ENCODE measurements at regions of chr1 and their contacts with region 1.

Region 1: DNA sequence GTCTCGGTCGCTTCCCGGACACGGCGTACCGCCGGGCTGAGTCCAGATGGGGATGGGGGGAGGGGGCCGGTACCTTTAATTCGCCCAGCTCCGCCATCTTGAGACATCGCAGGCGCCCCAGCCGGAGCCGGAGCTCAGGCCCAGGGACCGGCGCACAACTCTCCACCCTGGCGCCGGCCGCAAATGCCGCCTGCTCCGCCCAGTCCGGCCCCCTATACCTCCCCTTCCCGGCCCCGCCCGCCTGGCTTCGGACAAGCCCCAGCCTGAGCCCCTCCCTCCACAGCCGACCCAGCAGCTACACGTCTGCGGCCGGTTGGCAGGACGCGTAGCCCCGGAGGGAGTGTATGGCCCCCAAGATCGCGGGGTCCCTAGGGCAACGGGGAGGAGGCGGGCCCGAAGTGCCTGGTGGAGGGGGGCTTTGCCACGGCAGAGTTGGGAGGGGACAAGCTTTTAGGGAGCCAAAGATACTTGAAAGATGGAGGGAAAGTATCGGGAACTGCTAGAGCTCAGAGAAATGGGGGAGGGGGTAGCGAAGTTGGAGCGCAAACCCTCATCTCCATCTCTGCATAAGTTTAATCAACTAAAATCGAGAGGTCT is at the start of gene PIAS3:
- DNase-seq: peak; percentile 65
- ATAC-seq: peak; percentile 93
- H3K4me3 ChIP-seq: peak within 1 kb of the TSS; percentile 82
- H3K27ac ChIP-seq: peak within 1 kb of the TSS; percentile 67
- H3K4me1 ChIP-seq: no peaks in the 10 kb centered on the region
- H3K27me3 ChIP-seq: no peaks in the 10 kb centered on the region
- CTCF ChIP-seq: no peak
- EP300 ChIP-seq: 0 out of 4 replicates have a peak, but pooled peaks of 1 of the 2 experiments have one; percentile 12
- POLR2A ChIP-seq: peak; percentile 68
- RAD21 ChIP-seq: no peak
- polyA plus RNA-seq, gene PIAS3: 0.85 to 1.6 TPM

Region 2: GRCh38 chr1:145823565-145824498 is 35.2 kb before region 1 on chr1 and contains the starts of genes POLR3C and RNF115:
- CTCF ChIA-PET with region 1: interaction called, 10 read pairs
- POLR2A ChIA-PET with region 1: interaction called, 20 read pairs
- RAD21 ChIA-PET with region 1: no interaction called
- SMC1A ChIA-PET with region 1: interaction called, 13 read pairs
- in situ Hi-C with region 1: no loop called
- intact Hi-C with region 1: no loop called
- DNase-seq: peak; percentile 48
- ATAC-seq: peak; percentile 94
- H3K4me3 ChIP-seq: peak within 1 kb of the TSS; percentile 67
- H3K27ac ChIP-seq: peak within 1 kb of the TSS; percentile 95
- H3K4me1 ChIP-seq: peaks cover 10% of the 10 kb centered on the region
- H3K27me3 ChIP-seq: no peaks in the 10 kb centered on the region
- CTCF ChIP-seq: no peak
- EP300 ChIP-seq: 0 out of 4 replicates have a peak, but pooled peaks of 1 of the 2 experiments have one; percentile 34
- POLR2A ChIP-seq: peak; percentile 91
- RAD21 ChIP-seq: no peak
- polyA plus RNA-seq, gene POLR3C: 13.0 to 21.1 TPM
- polyA plus RNA-seq, gene RNF115: 3.4 to 5.4 TPM

Region 3: DNA sequence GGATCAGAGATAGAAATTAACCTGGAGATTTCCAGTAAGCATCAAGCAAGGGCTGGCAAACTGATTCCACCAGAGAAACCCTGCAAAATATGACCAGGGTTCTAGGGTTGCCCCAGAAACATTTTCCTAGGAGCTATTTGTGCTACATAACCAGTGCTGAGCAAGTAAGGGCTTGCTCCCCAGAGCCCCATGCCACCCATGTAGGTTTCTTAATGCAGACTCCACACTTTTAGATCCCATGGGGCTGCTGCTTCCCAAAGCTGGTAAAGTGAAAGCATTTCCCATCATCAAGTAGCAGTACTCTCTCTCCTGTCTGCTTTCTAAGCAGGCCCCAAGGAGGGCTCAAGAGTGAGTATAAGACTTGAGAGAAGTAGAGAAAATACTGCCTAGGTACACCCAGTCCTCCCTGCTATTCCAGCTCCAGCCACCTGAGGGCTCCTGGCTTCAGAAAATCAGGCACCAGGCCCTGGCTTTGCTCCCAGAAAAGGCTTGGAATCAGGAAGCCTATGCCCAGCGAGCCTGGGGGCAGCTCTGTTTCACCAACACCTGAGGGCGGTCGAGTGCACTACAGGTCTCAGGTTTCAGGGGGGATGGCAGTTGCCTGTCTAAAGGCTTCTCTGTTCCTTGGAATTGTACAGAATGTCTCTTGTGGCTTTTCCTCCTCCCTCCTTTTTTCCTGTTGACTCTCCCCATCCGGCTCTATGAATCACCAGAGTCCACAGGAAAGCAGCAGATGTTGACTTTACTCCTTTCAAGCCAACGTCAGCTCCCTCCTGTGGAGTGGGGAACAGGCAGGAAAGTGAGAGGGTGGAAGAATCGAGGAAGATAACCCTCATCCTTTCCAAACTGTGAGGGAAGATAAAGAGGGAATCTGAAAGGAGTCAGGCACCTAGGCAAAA is 32.8 kb after region 1 on chr1:
- CTCF ChIA-PET with region 1: interaction called, 13 read pairs
- POLR2A ChIA-PET with region 1: interaction called, 3 read pairs
- RAD21 ChIA-PET with region 1: interaction called, 3 read pairs
- SMC1A ChIA-PET with region 1: interaction called, 9 read pairs
- in situ Hi-C with region 1: no loop called
- intact Hi-C with region 1: no loop called
- DNase-seq: no peak
- ATAC-seq: peak; percentile 95
- H3K4me3 ChIP-seq: no peak overlapping the region
- H3K27ac ChIP-seq: no peak overlapping the region
- H3K4me1 ChIP-seq: no peaks in the 10 kb centered on the region
- H3K27me3 ChIP-seq: no peaks in the 10 kb centered on the region
- CTCF ChIP-seq: peak; percentile 89 to 90 (median 90)
- EP300 ChIP-seq: no peak
- POLR2A ChIP-seq: no peak
- RAD21 ChIP-seq: peak; percentile 81

Region 4: DNA sequence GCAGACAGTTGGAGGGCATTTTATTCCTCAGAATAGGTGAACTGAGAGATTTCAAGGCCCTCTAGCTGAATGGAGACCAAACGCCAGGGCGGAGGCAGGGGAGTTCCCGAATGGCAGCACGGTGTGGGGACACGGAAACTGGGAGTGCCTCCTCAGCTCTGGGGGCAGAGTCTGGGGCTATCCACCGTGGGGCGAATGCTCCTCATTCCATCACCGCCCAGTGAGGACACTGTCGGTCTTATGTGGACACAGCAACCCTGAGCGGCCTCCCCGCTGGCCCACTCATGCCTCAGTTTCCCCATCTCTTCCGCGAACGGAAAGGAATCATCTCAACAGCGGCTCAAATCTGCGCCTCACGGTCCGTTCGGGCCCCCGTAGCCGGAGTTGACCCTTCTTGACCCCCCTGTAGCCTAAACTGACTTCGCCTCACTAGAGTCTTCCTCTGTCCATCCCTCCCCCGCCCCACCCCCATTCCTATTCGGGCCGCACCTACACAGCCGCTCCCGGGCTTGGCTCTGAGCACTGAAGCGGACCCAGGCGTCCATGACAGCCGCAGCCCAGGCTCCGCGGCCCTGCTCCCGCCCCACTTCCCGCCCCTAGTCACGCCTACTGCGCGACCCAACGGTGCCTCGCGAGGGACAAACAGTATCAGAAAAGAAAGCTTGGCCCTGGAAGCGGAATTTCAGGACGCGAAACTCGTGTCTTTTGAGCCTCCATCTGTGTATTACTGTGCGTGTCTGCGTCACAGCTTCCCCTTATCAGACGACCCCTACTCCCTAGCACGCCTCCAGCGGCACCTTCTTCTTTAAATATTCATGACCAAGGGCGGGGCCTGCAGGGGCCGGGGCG is 59.4 kb after region 1 on chr1 and contains the start of gene PEX11B:
- CTCF ChIA-PET with region 1: interaction called, 3 read pairs
- POLR2A ChIA-PET with region 1: interaction called, 8 read pairs
- RAD21 ChIA-PET with region 1: interaction called, 7 read pairs
- SMC1A ChIA-PET with region 1: interaction called, 3 read pairs
- in situ Hi-C with region 1: loop called (anchors 5 kb)
- intact Hi-C with region 1: loop called (anchors 1 kb)
- DNase-seq: peak; percentile 75
- ATAC-seq: peak; percentile 94
- H3K4me3 ChIP-seq: peak within 1 kb of the TSS; percentile 97
- H3K27ac ChIP-seq: peak within 1 kb of the TSS; percentile 93
- H3K4me1 ChIP-seq: peaks cover 17% of the 10 kb centered on the region
- H3K27me3 ChIP-seq: no peaks in the 10 kb centered on the region
- CTCF ChIP-seq: no peak
- EP300 ChIP-seq: no peak
- POLR2A ChIP-seq: peak; percentile 93
- RAD21 ChIP-seq: no peak
- polyA plus RNA-seq, gene PEX11B: 44.8 to 69.4 TPM

Region 5: DNA sequence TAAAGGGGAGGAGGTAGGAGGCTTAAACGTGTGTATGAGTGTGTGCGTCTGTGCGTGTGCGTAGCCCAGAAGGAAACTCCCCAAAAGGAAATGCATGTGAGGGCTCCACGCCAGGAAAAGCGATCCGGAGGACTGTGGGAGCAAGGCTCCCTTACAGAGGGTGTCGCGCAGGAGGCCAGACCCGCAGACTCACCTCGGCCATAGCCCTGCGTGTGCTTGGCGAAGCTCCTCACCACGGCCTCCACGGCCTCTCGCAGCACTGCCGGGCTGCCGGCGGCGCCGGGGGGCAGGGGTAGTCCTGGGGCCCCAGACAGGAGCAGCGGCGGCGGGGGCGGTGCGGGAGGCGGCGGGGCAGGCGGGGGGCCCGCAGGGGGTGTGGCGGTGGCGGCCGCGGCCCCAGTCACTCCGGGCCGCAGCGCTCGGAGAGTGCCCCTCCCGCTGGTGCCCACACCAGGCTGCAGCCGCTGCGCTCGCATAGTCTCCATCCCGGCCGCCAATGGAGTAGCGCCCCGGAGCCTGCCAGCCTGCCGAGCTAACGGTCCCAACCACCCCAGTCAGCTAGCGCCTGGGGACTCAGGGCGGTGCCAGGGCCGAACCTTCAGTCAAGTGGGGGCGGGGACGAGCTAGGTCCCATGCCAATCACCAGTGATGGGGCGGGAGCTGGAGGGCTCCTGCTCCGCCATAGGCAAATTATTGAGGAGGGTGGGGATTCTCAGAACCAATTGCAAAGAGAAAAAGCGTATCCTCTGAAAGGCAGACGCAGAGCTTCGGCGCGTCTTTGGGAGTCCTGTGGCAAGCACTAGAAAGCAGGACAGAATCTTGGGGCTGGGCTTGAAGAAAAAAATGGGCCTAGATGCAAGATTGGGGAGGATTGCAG is 98.7 kb after region 1 on chr1 and contains the start of gene LIX1L:
- CTCF ChIA-PET with region 1: interaction called, 3 read pairs
- POLR2A ChIA-PET with region 1: interaction called, 8 read pairs
- RAD21 ChIA-PET with region 1: interaction called, 14 read pairs
- SMC1A ChIA-PET with region 1: interaction called, 7 read pairs
- in situ Hi-C with region 1: no loop called
- intact Hi-C with region 1: no loop called
- DNase-seq: peak; percentile 89
- ATAC-seq: peak; percentile 90
- H3K4me3 ChIP-seq: peak within 1 kb of the TSS; percentile 78
- H3K27ac ChIP-seq: peak within 1 kb of the TSS; percentile 73
- H3K4me1 ChIP-seq: peaks cover 8% of the 10 kb centered on the region
- H3K27me3 ChIP-seq: no peaks in the 10 kb centered on the region; a peak in 1 of 4 replicates
- CTCF ChIP-seq: no peak
- EP300 ChIP-seq: no peak
- POLR2A ChIP-seq: peak; percentile 86
- RAD21 ChIP-seq: no peak
- polyA plus RNA-seq, gene LIX1L: 5.5 to 12.2 TPM

Region 6: DNA sequence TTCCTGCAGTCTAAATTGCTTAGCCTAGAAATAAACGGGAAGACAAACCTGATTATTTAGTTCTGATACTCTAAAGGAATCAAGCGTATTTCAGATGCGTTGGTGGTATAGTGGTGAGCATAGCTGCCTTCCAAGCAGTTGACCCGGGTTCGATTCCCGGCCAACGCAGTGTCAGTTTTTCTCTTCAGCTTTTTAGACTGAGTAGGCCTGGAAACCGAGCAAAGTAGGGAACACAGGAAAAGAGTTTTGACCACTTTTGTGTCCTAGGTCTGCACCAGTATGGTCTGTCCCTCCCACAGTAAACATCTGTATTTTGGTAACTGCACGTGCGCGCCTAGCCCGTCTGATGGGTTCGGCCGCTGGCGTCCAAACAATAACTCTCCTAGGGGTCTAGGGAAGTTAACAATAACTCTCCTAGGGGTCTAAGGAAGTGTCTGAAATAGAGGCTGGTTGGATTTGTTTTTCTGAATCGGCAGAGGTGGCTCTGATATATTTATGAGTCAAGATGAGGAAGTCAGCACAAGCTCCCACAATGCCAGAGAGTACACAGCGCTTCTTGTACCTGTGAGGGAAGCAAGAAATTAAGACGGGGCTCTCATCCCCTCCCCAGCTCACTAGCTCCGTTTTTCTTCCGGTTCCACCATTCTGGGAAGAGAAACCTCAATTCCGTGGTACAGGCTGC is 178.1 kb after region 1 on chr1:
- CTCF ChIA-PET with region 1: interaction called, 7 read pairs
- POLR2A ChIA-PET with region 1: interaction called, 14 read pairs
- RAD21 ChIA-PET with region 1: interaction called, 4 read pairs
- SMC1A ChIA-PET with region 1: no interaction called
- in situ Hi-C with region 1: no loop called
- intact Hi-C with region 1: no loop called
- DNase-seq: peak; percentile 87
- ATAC-seq: peak; percentile 62
- H3K4me3 ChIP-seq: peak overlapping the region; percentile 90
- H3K27ac ChIP-seq: peak overlapping the region; percentile 79
- H3K4me1 ChIP-seq: no peaks in the 10 kb centered on the region; the same call in 1 of the 2 replicates
- H3K27me3 ChIP-seq: no peaks in the 10 kb centered on the region
- CTCF ChIP-seq: no peak
- EP300 ChIP-seq: peak in 1 of 2 experiments; percentile 77; a peak in 1 of 4 replicates
- POLR2A ChIP-seq: peak; percentile 15; the same call in 1 of the 2 replicates
- RAD21 ChIP-seq: no peak

Measured in GM12878 (cell line).